SK-N-SH (cell line): ENCODE measurements at regions of chr1 and their contacts with region 1.

Region 1: DNA sequence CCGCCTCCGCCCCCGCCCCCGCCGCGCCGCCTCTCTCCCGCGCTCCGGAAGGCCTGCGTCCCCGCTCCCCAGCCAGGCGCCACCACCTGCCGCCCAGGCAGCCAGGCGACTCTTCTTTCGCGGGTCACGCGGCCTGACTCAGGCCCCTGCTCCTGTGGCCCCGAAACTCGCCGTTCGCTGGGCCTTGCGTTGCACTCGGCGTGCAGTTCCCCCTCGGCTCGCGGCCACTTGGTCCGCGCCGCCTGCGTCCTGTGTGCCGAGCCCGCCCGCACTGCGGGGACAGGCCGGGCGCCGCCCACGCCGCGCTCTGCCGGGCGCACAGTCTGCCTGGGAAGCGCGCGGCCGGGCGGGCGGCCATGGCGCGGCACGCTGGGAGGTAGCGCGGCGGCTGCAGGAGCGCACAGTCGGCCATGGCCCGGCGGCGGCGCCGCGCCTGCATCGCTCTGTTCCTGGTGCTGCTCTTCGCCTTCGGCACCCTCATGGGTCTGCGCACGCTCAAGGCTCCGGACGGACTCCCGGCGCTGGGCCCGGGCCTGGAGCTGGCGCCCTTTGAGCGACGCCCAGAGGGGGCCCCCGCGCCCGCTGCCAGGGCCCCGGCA is at the start of gene MANEAL:
- DNase-seq: peak; percentile 91
- H3K4me3 ChIP-seq: peak within 1 kb of the TSS; percentile 53 to 63; a peak in 3 of 4 replicates
- H3K27ac ChIP-seq: peak within 1 kb of the TSS in 1 of 2 experiments; percentile 74; a peak in 2 of 4 replicates
- H3K4me1 ChIP-seq: peaks cover 0 to 14% of the 10 kb centered on the region in 2 experiments; a peak in 1 of 4 replicates
- H3K27me3 ChIP-seq: peaks cover 18% of the 10 kb centered on the region; the same call in 1 of the 2 replicates
- CTCF ChIP-seq: no peak
- EP300 ChIP-seq: no peak
- RAD21 ChIP-seq: no peak
- polyA plus RNA-seq, gene MANEAL: 2.7 and 3.7 TPM in 2 replicates

Region 2: DNA sequence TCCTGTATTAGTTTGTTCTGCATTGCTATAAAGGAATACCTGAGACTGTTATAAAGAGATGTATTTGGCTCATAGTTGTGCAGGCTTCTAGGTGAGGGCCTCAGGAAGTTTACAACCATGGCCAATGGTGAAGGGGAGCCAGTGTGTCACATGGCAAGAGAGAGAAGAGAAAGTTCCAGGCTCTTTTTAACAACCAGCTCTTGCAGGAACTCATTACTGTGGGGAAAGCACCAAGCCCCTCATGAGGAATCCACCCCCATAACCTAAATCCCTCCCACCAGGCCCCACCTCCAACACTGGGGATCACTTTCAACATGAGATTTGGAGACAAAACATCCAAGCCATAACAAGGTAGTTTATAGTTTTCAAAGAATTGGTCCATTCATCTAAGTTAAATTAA is 274.3 kb before region 1 on chr1:
- CTCF ChIA-PET with region 1: no interaction called
- POLR2A ChIA-PET with region 1: no interaction called
- DNase-seq: no peak
- H3K4me3 ChIP-seq: no peak overlapping the region
- H3K27ac ChIP-seq: no peak overlapping the region
- H3K4me1 ChIP-seq: peaks cover 0 to 8% of the 10 kb centered on the region in 2 experiments; a peak in 1 of 4 replicates
- H3K27me3 ChIP-seq: no peaks in the 10 kb centered on the region
- CTCF ChIP-seq: no peak
- EP300 ChIP-seq: no peak
- RAD21 ChIP-seq: no peak

Region 3: GRCh38 chr1:37595440-37596319 is 198.2 kb before region 1 on chr1 and contains the start of gene GNL2:
- CTCF ChIA-PET with region 1: no interaction called
- POLR2A ChIA-PET with region 1: no interaction called
- DNase-seq: peak; percentile 96
- H3K4me3 ChIP-seq: peak within 1 kb of the TSS; percentile 84 to 87
- H3K27ac ChIP-seq: peak within 1 kb of the TSS; percentile 77 to 80
- H3K4me1 ChIP-seq: peaks cover 10 to 24% of the 10 kb centered on the region in 2 experiments; a peak in 3 of 4 replicates
- H3K27me3 ChIP-seq: no peaks in the 10 kb centered on the region
- CTCF ChIP-seq: no peak
- EP300 ChIP-seq: no peak
- RAD21 ChIP-seq: no peak
- polyA plus RNA-seq, gene GNL2: 37.6 and 43.7 TPM in 2 replicates

Region 4: GRCh38 chr1:37807555-37808368 is 13.9 kb after region 1 on chr1 and contains the starts of genes C1orf122 and YRDC:
- CTCF ChIA-PET with region 1: interaction called, 9 read pairs
- POLR2A ChIA-PET with region 1: interaction called, 27 read pairs
- DNase-seq: peak; percentile 98
- H3K4me3 ChIP-seq: peak within 1 kb of the TSS; percentile 91
- H3K27ac ChIP-seq: peak within 1 kb of the TSS; percentile 82 to 91
- H3K4me1 ChIP-seq: peaks cover 15 to 29% of the 10 kb centered on the region in 2 experiments
- H3K27me3 ChIP-seq: no peaks in the 10 kb centered on the region
- CTCF ChIP-seq: no peak
- EP300 ChIP-seq: no peak
- RAD21 ChIP-seq: no peak
- polyA plus RNA-seq, gene C1orf122: 63.2 and 75.3 TPM in 2 replicates
- polyA plus RNA-seq, gene YRDC: 34.2 and 46.1 TPM in 2 replicates